Caco-2 (cell line): ENCODE measurements at regions of chr19 and their contacts with region 1.

Region 1: DNA sequence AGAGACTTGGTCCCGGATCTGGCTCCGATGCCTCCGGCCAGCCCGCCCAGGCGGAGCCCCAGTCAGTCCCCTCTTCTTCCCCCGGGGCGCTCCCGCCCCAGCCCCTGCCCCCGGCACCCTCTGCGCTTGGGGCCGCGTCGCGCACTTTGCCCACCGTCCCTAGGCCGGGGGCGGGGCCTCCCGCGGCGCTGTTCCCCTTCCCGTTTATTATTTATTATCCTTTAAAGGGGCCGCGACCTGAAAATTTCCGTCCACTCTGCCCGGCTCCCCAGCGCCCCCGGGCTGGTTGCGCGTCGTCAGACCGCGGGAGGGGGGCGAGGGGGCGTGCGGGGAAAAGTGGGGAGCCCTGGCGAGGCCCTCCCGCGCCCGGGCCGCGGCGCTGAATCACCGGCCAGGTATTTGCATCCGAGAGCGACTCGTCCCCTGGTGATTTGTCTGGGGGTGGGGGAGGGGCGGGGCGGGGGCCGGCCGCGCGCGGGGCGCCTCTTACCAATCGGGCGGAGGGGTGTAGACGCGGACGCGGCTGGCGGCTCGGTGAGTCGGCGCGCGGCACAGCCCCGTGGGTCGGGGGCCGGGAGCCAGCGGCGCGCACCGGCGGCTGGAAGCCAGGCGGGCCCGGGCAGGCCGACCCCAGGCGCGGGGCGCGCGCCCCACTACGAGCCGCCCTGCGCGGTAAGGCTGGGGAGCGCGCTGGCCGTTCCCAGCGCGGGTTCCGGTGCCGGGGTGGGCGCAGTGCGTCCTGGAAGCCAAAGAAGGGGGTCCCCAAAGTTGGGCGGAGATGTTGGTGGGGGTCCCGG is at the start of gene ARID3A:
- DNase-seq: peak; percentile 89 to 91
- H3K4me3 ChIP-seq: peak within 1 kb of the TSS; percentile 98
- H3K4me3 Mint-ChIP-seq: peak within 1 kb of the TSS; percentile 85
- H3K27ac Mint-ChIP-seq: peak within 1 kb of the TSS; percentile 82
- H3K4me1 ChIP-seq: peaks cover 33% of the 10 kb centered on the region
- H3K4me1 Mint-ChIP-seq: no peaks in the 10 kb centered on the region
- H3K27me3 ChIP-seq: no peaks in the 10 kb centered on the region
- H3K27me3 Mint-ChIP-seq: no peaks in the 10 kb centered on the region
- CTCF ChIP-seq: no peak
- total RNA-seq, gene ARID3A: 217 and 239 TPM in 2 replicates

Region 2: GRCh38 chr19:664913-665443 is 260.7 kb before region 1 on chr19:
- CTCF ChIA-PET with region 1: no interaction called
- POLR2A ChIA-PET with region 1: no interaction called
- intact Hi-C with region 1: no loop called
- DNase-seq: peak; percentile 90 to 92
- H3K4me3 ChIP-seq: no peak overlapping the region
- H3K4me3 Mint-ChIP-seq: peak overlapping the region; percentile 80
- H3K27ac Mint-ChIP-seq: peak overlapping the region; percentile 48
- H3K4me1 ChIP-seq: peaks cover 38% of the 10 kb centered on the region
- H3K4me1 Mint-ChIP-seq: no peaks in the 10 kb centered on the region
- H3K27me3 ChIP-seq: no peaks in the 10 kb centered on the region
- H3K27me3 Mint-ChIP-seq: no peaks in the 10 kb centered on the region
- CTCF ChIP-seq: peak; percentile 90 to 95

Region 3: DNA sequence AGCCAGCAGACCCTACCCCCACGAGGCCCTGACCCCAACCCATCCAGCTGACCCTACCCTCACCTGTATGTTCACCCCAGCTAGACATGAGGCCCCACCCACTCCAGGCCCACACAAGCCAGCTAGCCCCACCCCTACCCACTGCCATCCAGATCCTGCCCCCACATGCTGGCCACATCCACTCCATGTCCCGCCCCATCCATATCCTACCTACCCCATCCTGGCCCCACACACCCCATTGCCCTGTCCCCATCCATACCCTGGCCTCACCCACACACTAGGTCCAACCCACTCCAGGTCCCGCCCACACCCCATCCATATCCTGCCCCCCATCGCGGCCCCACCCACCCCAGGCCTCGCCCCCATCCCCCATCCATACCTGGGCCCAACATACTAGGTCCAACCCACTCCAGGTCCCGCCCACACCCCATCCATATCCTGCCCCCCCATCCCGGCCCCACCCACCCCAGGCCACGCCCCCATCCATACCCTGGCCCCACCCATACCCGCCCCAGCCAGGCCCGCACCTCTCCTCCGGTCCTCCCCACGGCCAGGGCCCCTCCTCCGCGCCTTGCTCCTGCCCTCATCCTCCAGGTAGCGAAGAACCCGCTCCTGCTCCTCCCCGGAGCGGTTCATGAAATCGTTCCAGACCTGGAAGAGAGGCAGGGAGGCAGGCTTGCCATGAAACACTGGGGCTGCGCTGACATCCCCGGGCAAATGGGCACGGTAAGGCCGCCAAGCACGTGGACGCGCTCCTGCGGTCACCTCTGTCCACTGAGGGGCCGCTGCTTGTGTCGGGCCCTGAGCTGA is 25.2 kb before region 1 on chr19:
- CTCF ChIA-PET with region 1: no interaction called
- POLR2A ChIA-PET with region 1: no interaction called
- intact Hi-C with region 1: no loop called
- DNase-seq: no peak
- H3K4me3 ChIP-seq: no peak overlapping the region
- H3K4me3 Mint-ChIP-seq: no peak overlapping the region
- H3K27ac Mint-ChIP-seq: no peak overlapping the region
- H3K4me1 ChIP-seq: no peaks in the 10 kb centered on the region
- H3K4me1 Mint-ChIP-seq: no peaks in the 10 kb centered on the region
- H3K27me3 ChIP-seq: no peaks in the 10 kb centered on the region
- H3K27me3 Mint-ChIP-seq: no peaks in the 10 kb centered on the region
- CTCF ChIP-seq: no peak

Region 4: DNA sequence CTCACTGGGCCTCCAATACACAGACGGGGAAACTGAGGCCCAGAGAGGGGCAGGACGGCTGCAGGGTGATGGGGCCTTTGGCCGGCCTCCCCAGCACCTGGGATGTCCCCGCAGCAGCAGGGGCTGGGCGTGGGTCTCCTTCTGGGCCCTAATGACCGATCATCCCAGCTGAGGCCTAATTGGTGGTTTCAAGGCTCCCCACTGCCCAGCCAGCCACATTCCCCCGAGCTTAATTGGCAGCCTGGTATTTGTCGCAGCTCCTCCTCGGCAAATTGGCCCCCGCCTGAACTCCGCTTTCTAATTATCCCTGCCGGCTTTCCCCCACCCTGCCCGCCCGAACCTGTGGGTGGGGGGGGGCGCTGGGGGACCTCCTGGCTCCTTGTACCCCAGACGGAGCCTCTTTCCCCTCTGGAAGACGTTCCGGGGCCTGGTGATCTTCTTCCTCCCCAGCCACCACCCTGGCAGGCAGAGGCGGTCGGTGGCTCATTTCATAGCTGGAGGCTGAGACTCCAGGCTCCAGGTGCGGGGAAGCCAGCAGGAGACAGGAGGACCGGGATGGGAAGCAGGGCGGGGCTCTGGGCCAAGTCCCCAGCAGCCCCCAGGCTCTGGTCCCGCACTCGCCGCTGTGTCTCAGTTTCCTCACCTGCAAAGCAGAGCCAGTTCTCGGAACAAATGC is 31.2 kb after region 1 on chr19:
- CTCF ChIA-PET with region 1: interaction called, 3 read pairs
- POLR2A ChIA-PET with region 1: interaction called, 6 read pairs
- intact Hi-C with region 1: loop called (anchors 1 kb)
- DNase-seq: peak; percentile 91 to 94
- H3K4me3 ChIP-seq: 0 out of 2 replicates have a peak overlapping the region, but pooled peaks have one; percentile 8
- H3K4me3 Mint-ChIP-seq: peak overlapping the region; percentile 67
- H3K27ac Mint-ChIP-seq: peak overlapping the region; percentile 96
- H3K4me1 ChIP-seq: peaks cover 88% of the 10 kb centered on the region
- H3K4me1 Mint-ChIP-seq: peaks cover 14% of the 10 kb centered on the region
- H3K27me3 ChIP-seq: no peaks in the 10 kb centered on the region
- H3K27me3 Mint-ChIP-seq: no peaks in the 10 kb centered on the region
- CTCF ChIP-seq: no peak